ENCODE measurements at regions of chr19 and their contacts with region 1.

Region 1: GRCh38 chr19:13718733-13719132 is 45.6 kb upstream of the MRI1 start:
- DNase-seq: peak; percentile 36
- H3K27ac ChIP-seq: no peak overlapping the region
- CTCF ChIP-seq: no peak

Region 2: GRCh38 chr19:13597640-13598039 is 121.1 kb before region 1 on chr19:
- CTCF ChIA-PET with region 1: interaction called, 12 read pairs
- POLR2A ChIA-PET with region 1: no interaction called
- DNase-seq: peak; percentile 82
- H3K27ac ChIP-seq: no peak overlapping the region
- CTCF ChIP-seq: peak; percentile 68

Region 3: GRCh38 chr19:13652810-13653590 is 65.7 kb before region 1 on chr19:
- CTCF ChIA-PET with region 1: interaction called, 12 read pairs
- POLR2A ChIA-PET with region 1: no interaction called
- DNase-seq: no peak
- H3K27ac ChIP-seq: no peak overlapping the region
- CTCF ChIP-seq: no peak

Region 4: DNA sequence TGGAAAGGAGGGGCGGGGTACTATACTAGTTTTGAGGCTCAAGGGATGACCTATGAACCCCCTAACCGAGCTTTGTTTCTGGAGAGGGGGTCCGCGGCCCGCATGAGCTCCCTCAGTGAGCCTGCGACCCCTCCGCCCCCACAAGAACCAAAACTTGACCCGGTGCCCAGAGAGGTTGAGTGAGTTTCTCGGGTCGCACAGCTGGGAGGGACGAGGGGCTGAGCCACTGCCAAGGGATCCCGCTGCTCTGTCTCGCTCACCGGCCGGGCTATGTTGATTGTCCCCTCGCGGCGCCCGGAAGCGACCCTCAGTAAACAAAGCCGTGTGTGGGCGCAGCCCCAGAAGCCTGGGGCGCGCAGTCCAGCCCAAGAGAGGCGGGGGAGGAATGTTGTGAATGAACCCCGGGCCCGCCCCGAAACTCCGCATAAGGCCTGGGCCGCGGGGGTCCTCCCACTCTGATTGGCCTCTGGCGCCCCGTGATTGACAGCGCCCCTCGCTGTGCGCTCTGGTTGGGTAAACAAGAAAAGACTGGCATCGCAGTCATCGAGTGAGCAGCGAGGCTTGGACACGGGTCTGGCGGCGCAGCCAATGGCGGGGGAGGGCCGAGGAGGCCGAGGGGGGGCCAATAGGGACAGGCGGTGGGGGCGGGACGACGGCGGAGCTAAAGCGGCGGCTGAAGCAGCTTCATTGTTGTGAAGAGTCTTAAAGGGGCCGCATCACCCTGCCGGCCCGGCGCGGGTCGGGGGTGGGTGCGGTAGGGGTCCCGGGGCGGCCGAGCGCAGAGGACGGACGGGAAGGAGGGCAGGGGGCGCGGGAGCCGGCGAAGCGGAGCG is 76.2 kb after region 1 on chr19 and contains the start of gene ZSWIM4:
- CTCF ChIA-PET with region 1: no interaction called
- POLR2A ChIA-PET with region 1: no interaction called
- DNase-seq: peak; percentile 99
- H3K27ac ChIP-seq: peak within 1 kb of the TSS; percentile 93
- CTCF ChIP-seq: no peak